Psoas muscle (tissue), 8 donors: ENCODE measurements at regions of chr22 and their contacts with region 1.

Region 1: DNA sequence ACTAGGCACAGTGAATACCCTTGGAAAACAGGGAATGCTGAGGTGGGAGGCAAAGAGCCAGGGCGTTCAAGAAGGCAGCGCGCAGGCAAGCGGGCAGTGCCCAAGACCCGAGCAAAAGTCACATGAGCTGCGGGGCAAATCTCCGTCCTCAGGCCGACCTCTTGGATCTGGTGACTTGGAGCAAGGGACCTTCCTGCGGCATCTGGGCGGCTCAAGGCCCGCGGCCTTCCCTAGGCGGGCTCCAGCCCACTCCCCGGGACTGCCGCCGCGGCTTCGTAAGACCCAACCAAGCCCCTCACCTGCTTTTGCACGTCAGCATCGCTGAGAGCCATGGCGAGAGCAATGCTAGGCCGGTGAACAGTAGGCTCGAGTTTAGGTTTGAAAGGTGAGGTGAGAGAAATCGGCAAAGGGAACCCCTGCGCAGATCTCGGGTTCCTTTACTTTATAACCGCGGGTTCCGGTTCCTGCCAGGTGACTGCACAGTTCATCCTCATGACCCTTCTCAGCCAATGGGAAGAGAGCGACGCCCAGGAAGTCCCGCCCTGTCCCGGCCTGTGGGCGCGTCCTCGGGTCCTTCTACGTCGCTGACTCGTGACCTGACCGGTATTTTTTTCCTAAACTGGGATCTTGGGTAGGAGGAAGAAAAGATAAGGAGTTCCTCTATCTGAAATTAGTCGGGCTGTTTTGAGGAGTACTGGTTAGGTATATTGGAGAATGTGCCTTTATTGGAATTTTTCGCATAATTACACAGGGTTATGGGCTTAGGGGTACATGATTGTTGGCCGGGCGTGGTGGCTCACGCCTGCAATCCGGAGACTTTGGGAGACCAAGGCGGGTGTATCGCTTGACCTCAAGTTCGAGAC is at the start of gene ATP6V1E1:
- DNase-seq: peak; percentile 96 to 98
- ATAC-seq: peak; percentile 98 to 100 (median 99)
- H3K4me3 ChIP-seq: peak within 1 kb of the TSS; percentile 99
- H3K27ac ChIP-seq: peak within 1 kb of the TSS; percentile 98
- H3K4me1 ChIP-seq: peaks cover 17% of the 10 kb centered on the region
- H3K27me3 ChIP-seq: no peaks in the 10 kb centered on the region
- CTCF ChIP-seq: no peak
- total RNA-seq, gene ATP6V1E1: 122 to 185 (median 142) TPM

Region 2: DNA sequence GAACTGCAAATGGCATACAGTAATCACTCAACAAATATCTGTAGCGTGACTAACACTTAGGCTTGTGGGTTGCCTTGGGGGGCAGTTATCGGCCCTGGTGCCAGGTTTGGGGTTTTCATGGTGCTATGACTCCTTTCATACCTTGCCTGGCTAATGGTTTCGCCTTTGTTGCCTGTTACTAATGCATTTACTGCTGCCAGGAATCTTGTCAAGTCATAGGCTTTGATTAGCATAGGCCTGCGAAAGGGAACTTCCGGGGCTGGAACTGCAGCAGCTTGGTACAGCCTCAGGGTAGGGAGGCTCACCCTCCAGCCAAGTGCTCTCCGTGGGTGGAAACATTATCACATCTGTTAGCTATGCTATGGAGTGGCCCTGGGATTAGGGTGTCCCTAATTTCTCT is 52.1 kb before region 1 on chr22:
- intact Hi-C with region 1: loop called in 1 of 2 experiments (anchors 5 kb)
- DNase-seq: peak in 1 of 2 donors; percentile 46
- ATAC-seq: peak; percentile 61 to 85 (median 76)
- H3K4me3 ChIP-seq: no peak overlapping the region
- H3K27ac ChIP-seq: no peak overlapping the region
- H3K4me1 ChIP-seq: peaks cover 7% of the 10 kb centered on the region
- H3K27me3 ChIP-seq: no peaks in the 10 kb centered on the region
- CTCF ChIP-seq: no peak